Heart left ventricle (tissue), 16 donors: ENCODE measurements at regions of chr4 and their contacts with region 1.

Region 1: GRCh38 chr4:55125087-55125721 is at the start of gene KDR:
- DNase-seq: peak; percentile 49 to 76 (median 69)
- ATAC-seq: peak; percentile 75 to 96 (median 92)
- H3K4me3 ChIP-seq: peak within 1 kb of the TSS; percentile 45 to 87 (median 74)
- H3K27ac ChIP-seq: peak within 1 kb of the TSS; percentile 22 to 86 (median 74)
- H3K4me1 ChIP-seq: peaks cover 0 to 19% (median 5%) of the 10 kb centered on the region in 12 donors
- H3K27me3 ChIP-seq: peaks cover 0 to 28% (median 13%) of the 10 kb centered on the region in 9 donors
- CTCF ChIP-seq: no peak
- POLR2A ChIP-seq: peak in 1 of 2 donors; percentile 94
- total RNA-seq, gene KDR: 13.4 to 51.0 (median 34.5) TPM

Region 2: DNA sequence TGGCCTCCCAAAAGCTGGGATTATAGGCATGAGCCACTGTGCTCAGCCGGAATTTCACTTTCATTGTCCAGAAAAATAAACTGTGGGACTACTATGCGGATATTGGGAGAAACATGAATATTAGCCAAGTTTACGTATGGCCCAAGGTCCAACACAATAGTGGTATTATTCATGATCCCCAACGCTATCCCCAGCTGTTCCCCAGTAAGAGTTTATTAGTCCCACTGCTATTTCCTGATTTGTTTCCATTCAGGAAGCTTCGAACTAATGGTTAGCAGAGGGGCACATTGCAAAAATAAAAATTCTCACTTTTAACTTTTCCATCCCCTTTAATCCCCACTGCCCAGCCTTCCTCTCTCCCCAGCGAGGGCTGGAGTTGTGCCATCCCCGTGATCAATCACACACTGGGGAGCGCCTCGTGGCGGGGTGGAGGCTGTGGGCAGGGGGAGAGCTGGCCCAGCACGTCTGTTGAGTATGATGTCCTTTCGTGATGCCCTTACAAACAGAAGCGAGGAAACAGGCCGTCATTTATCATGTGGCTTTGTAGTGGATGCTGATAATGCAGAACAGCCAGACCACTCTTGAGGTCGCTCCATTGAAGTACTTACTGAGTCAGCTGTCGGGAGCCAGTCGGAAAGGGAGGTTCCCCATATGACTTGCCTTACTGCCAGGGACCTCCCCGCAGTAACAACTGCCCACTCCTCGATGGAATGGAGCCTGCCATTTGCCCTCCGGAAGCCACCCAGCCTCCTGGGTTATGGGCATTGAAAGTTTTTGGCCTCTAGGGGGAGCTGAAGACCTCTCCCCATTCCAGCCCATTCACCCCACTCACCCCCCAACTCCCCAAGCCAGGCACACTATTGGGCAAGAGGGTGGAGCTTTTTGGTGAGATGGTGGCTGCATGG is 116.8 kb before region 1 on chr4:
- intact Hi-C with region 1: loop called in 6 of 10 experiments (anchors 5 to 10 kb)
- DNase-seq: no peak
- ATAC-seq: peak in 3 of 4 donors; percentile 24 to 50 (median 41)
- H3K4me3 ChIP-seq: no peak overlapping the region
- H3K27ac ChIP-seq: no peak overlapping the region
- H3K4me1 ChIP-seq: peaks cover 0 to 21% (median 10%) of the 10 kb centered on the region in 12 donors
- H3K27me3 ChIP-seq: no peaks in the 10 kb centered on the region
- CTCF ChIP-seq: peak; percentile 14 to 48 (median 26)
- POLR2A ChIP-seq: no peak

Region 3: DNA sequence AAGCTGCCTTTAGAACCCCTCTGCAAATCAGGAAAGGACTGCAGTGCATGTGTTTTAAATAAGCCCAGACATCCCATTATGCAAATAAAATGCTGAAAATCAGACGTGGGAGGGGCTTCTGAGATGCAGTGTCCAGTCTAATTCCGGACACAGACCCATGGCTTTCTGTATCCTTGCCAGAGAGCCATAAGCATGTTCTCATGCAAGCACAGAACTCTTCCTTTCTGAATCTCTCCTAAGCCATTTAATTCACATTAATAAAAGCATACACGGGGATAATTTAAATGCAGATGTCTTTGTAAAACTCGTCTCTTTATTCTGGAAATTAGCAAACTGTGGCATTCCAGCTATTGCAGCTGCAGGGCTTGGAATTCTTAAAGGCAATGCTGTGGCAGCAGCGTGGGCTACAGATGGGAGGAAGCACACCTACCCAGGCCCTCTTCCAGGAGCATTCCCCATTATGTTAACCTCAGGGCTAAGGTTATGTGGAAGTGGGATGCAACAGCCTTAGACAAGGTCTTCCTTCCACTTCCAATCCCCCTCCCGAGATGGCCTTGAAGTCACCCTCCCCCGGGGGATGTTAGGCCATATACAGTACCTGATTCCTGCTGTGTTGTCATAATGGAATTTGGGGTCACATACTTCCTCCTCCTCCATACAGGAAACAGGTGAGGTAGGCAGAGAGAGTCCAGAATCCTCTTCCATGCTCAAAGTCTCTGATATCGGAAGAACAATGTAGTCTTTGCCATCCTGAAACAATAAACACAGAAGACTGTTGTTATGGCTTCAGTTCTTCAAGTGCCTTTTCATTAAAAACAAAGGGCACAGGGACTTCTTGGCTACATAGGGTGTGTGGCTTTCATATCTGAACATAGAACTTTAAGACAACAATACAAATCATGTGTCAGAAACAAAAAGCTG is 37.9 kb before region 1 on chr4:
- intact Hi-C with region 1: loop called in 1 of 10 experiments (anchors 2 kb)
- DNase-seq: no peak
- ATAC-seq: no peak
- H3K4me3 ChIP-seq: no peak overlapping the region
- H3K27ac ChIP-seq: peak overlapping the region in 3 of 12 donors; percentile 9 to 12 (median 12)
- H3K4me1 ChIP-seq: peaks cover 0 to 63% (median 21%) of the 10 kb centered on the region in 12 donors
- H3K27me3 ChIP-seq: no peaks in the 10 kb centered on the region
- CTCF ChIP-seq: no peak
- POLR2A ChIP-seq: no peak

Region 4: GRCh38 chr4:55303818-55304217 is 178.6 kb after region 1 on chr4:
- intact Hi-C with region 1: loop called in 1 of 10 experiments (anchors 2 kb)
- DNase-seq: peak in 2 of 5 donors; percentile 33 to 37
- ATAC-seq: peak; percentile 55 to 97 (median 94)
- H3K4me3 ChIP-seq: no peak overlapping the region
- H3K27ac ChIP-seq: peak overlapping the region in 2 of 12 donors; percentile 12 to 50
- H3K4me1 ChIP-seq: peaks cover 0 to 12% (median 4%) of the 10 kb centered on the region in 12 donors
- H3K27me3 ChIP-seq: no peaks in the 10 kb centered on the region
- CTCF ChIP-seq: no peak
- POLR2A ChIP-seq: no peak

Region 5: GRCh38 chr4:55321707-55322264 is 196.6 kb after region 1 on chr4:
- intact Hi-C with region 1: loop called in 3 of 10 experiments (anchors 5 to 10 kb)
- DNase-seq: peak in 4 of 5 donors; percentile 70 to 76 (median 72)
- ATAC-seq: peak in 2 of 4 donors; percentile 50 to 59
- H3K4me3 ChIP-seq: no peak overlapping the region
- H3K27ac ChIP-seq: no peak overlapping the region
- H3K4me1 ChIP-seq: peaks cover 0 to 20% (median 3%) of the 10 kb centered on the region in 12 donors
- H3K27me3 ChIP-seq: no peaks in the 10 kb centered on the region
- CTCF ChIP-seq: peak; percentile 46 to 81 (median 72)
- POLR2A ChIP-seq: no peak

Region 6: GRCh38 chr4:55447831-55448230 is 322.6 kb after region 1 on chr4:
- intact Hi-C with region 1: no loop called
- DNase-seq: no peak
- ATAC-seq: no peak
- H3K4me3 ChIP-seq: no peak overlapping the region
- H3K27ac ChIP-seq: no peak overlapping the region
- H3K4me1 ChIP-seq: peaks cover 0 to 5% (median 0%) of the 10 kb centered on the region in 12 donors
- H3K27me3 ChIP-seq: no peaks in the 10 kb centered on the region
- CTCF ChIP-seq: no peak
- POLR2A ChIP-seq: no peak